Ascending aorta (tissue), 2 donors: ENCODE measurements at regions of chr14 and their contacts with region 1.

Region 1: GRCh38 chr14:49862089-49862673 is 9.6 kb upstream of the NEMF start:
- DNase-seq: peak; percentile 44 to 95
- H3K4me3 ChIP-seq: peak overlapping the region; percentile 65 to 77
- H3K27ac ChIP-seq: peak overlapping the region; percentile 98 to 99
- H3K4me1 ChIP-seq: peaks cover 3 to 11% of the 10 kb centered on the region in 2 donors
- H3K27me3 ChIP-seq: no peaks in the 10 kb centered on the region
- CTCF ChIP-seq: peak; percentile 100

Region 2: DNA sequence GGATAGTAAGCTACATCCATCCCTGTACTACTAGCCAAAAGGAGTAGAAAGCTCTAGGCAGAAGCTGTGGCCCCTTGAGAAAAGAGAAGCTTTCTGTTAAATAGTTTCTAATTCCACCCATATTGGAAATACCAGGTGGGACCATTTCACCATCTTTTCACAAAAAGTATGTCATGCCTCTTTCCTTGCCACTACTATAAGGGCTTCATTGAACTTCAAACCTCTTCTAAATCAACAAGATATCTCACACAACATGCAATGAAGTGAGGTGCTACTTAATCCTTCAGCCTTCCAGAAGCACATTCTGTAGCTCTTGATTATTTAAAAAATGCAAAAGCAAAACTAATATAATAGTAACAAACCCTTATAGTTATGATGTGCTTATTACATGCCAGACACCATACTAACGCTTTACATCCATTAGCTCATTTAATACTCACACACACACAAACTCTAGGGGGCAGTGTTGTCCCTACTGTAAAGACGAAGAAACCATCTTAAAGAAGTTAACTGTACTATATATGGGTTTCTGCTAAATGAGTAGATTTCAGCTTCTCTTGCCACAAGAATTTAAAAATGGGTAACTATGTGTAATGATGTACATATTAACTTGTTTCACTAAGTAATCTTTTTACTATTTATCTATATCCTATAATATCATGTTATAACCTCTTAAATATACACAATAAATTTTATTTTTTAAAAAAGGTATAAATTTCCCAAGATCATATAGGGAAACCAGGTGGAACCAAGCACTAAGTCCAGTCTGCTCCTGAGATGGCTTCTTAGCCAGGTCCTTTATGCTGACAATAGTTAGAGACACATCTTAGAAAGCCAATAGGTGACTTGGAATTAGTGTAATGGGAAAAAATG is 400.4 kb before region 1 on chr14:
- intact Hi-C with region 1: no loop called
- DNase-seq: no peak
- H3K4me3 ChIP-seq: no peak overlapping the region
- H3K27ac ChIP-seq: no peak overlapping the region
- H3K4me1 ChIP-seq: no peaks in the 10 kb centered on the region
- H3K27me3 ChIP-seq: no peaks in the 10 kb centered on the region
- CTCF ChIP-seq: peak; percentile 38 to 55 (median 46)

Region 3: GRCh38 chr14:49620182-49621113 is 241.7 kb before region 1 on chr14 and contains the starts of genes MGAT2 and RPL36AL:
- intact Hi-C with region 1: loop called (anchors 5 kb)
- DNase-seq: peak; percentile 95 to 98
- H3K4me3 ChIP-seq: peak within 1 kb of the TSS; percentile 63 to 98
- H3K27ac ChIP-seq: peak within 1 kb of the TSS; percentile 97 to 98
- H3K4me1 ChIP-seq: peaks cover 6 to 29% of the 10 kb centered on the region in 2 donors
- H3K27me3 ChIP-seq: no peaks in the 10 kb centered on the region
- CTCF ChIP-seq: peak; percentile 20 to 32 (median 30)
- total RNA-seq, gene MGAT2: 37.4 TPM
- total RNA-seq, gene RPL36AL: 21.3 TPM

Region 4: DNA sequence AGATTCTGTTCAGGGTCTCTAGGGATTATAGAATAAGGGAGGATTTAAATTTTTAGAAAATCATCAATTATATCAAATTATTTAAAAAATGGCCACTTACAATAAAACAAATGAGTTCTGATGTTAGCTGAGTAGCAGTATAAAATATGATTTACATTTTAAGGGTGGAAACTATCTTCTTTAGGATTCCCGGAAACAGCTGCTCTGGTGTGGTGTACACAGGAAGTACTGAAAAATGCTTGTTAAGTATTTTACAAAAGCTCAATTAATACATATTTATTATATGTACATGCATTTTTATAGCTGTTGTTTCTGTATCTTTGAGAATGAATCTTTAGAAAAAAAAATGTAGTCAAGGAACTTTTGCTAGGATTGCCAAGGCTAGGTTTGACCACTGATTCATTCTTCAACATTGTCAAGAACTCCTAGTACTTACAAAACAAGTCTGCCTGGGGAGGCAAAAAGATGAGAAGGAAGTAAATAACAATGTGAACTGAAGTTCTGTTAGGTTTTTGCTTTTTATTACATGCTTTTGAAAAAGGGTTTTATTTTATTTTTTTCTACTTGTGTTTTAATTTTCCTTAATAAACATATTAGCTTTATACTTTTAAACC is 78.7 kb after region 1 on chr14:
- intact Hi-C with region 1: no loop called
- DNase-seq: peak in 1 of 2 donors; percentile 18
- H3K4me3 ChIP-seq: no peak overlapping the region
- H3K27ac ChIP-seq: no peak overlapping the region
- H3K4me1 ChIP-seq: no peaks in the 10 kb centered on the region
- H3K27me3 ChIP-seq: no peaks in the 10 kb centered on the region
- CTCF ChIP-seq: no peak

Region 5: DNA sequence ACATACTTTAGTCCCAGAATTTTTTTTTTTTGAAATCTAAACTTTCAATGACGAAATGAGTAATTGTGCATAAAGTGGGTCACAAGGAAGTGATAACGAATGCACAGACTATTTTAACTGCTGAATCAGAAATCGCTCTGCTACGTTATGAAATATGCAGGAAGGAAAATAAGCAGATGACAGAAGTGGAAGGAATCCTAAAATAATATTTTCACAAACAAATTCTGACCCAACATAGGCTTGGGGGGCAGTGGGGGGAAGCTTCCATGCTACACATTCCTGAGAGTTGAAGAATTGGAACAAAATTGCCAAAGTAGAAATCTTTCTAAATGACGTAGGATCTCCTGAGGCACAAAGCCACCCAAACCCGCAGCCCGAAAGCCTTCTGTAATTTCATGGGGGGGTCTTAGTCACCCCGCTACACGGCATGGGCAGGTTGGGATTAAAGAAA is 120.3 kb after region 1 on chr14:
- intact Hi-C with region 1: loop called (anchors 5 kb)
- DNase-seq: peak in 1 of 2 donors; percentile 86
- H3K4me3 ChIP-seq: peak overlapping the region; percentile 36 to 53
- H3K27ac ChIP-seq: peak overlapping the region; percentile 80 to 89
- H3K4me1 ChIP-seq: peaks cover 6 to 25% of the 10 kb centered on the region in 2 donors
- H3K27me3 ChIP-seq: no peaks in the 10 kb centered on the region
- CTCF ChIP-seq: no peak

Region 6: GRCh38 chr14:50003213-50004031 is 141.2 kb after region 1 on chr14:
- intact Hi-C with region 1: loop called (anchors 2 kb)
- DNase-seq: peak; percentile 33 to 90
- H3K4me3 ChIP-seq: peak overlapping the region; percentile 62 to 69
- H3K27ac ChIP-seq: peak overlapping the region; percentile 96 to 97
- H3K4me1 ChIP-seq: peaks cover 14 to 48% of the 10 kb centered on the region in 2 donors
- H3K27me3 ChIP-seq: no peaks in the 10 kb centered on the region
- CTCF ChIP-seq: peak in 1 of 3 experiments; percentile 34

Region 7: DNA sequence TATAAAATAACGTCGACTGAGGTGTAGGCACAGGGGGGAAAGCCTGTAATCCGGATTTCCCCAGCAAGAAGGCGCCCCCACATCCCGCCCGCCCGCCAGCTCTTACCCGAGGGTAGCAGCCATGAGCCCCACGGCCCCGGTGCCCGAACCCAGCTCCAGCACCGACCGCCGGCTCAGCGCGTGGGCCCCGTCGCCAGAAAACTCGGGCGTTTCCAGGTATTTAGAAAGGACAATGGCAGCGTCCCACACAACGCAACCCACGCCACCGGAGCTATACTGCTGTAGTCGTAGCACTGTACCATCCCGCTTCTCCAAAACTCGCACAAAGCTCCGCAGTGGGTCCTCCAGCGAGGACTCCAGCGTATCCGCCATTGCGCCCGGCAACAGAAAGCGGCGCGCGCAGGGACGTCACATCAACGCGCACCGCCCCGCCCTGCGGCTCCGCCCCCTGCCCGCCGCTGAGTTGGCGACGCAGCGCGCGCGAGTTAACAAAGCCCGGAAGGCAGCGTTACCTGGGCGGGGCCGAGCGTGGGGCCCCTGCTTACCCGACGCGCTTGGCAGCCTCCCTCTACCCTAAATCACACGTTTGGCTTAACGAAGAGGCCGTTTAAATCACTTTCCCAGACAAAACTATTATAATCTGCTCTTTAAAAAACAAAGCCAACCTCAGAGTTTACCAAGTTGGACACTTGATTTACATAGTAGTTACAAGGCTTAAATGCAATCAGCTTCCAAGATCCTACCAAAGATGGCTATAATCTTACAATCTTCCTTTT is 254.2 kb after region 1 on chr14 and contains the start of gene VCPKMT:
- intact Hi-C with region 1: loop called (anchors 2 kb)
- DNase-seq: peak; percentile 74 to 97
- H3K4me3 ChIP-seq: peak within 1 kb of the TSS; percentile 84
- H3K27ac ChIP-seq: peak within 1 kb of the TSS; percentile 82 to 85
- H3K4me1 ChIP-seq: peaks cover 0 to 10% of the 10 kb centered on the region in 2 donors
- H3K27me3 ChIP-seq: no peaks in the 10 kb centered on the region
- CTCF ChIP-seq: no peak
- total RNA-seq, gene VCPKMT: not detected

Region 8: DNA sequence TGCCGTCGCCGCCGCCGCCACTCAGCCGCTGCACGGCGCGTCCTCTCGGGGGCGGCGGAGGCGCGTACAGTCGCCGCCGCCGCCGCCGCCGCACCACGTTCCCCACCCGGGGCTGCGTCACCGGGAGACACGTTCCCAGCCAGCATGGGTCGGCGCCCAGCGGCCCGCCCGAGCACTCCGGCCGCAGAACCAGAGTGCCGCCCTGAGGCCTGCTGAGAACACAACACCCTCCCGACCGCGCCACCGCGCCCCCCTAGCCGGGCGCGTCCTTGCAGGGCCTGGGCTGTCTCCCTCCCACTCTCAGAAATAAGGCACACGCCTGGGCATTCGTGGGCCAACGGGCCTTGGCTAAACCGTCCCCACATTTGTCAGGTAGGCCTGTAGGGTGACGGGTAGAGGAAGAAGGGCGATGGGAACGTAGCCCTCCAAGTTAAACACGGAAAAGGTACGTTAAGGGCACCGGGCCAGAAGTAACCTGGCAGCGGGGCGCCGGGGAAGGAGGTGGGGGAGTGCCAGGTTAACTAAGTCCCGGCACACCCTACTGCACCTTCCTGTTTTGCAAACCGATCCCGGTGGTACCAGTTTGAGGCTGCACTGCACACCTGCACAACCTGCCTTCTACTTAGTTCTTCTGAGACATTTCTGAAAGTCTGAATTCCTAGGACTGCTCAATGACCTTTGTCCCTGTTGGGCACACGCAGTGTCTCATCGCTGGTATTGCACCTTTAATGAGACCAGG is 670.5 kb after region 1 on chr14 and contains the start of gene MAP4K5:
- intact Hi-C with region 1: loop called (anchors 5 kb)
- DNase-seq: peak; percentile 61 to 95
- H3K4me3 ChIP-seq: peak within 1 kb of the TSS; percentile 74 to 77
- H3K27ac ChIP-seq: peak within 1 kb of the TSS; percentile 86 to 97
- H3K4me1 ChIP-seq: peaks cover 4 to 17% of the 10 kb centered on the region in 2 donors
- H3K27me3 ChIP-seq: no peaks in the 10 kb centered on the region
- CTCF ChIP-seq: peak; percentile 94 to 97 (median 95)
- total RNA-seq, gene MAP4K5: 249 TPM